CD8-positive, alpha-beta T cell (primary cell): ENCODE measurements at regions of chr1 and their contacts with region 1.

Region 1: DNA sequence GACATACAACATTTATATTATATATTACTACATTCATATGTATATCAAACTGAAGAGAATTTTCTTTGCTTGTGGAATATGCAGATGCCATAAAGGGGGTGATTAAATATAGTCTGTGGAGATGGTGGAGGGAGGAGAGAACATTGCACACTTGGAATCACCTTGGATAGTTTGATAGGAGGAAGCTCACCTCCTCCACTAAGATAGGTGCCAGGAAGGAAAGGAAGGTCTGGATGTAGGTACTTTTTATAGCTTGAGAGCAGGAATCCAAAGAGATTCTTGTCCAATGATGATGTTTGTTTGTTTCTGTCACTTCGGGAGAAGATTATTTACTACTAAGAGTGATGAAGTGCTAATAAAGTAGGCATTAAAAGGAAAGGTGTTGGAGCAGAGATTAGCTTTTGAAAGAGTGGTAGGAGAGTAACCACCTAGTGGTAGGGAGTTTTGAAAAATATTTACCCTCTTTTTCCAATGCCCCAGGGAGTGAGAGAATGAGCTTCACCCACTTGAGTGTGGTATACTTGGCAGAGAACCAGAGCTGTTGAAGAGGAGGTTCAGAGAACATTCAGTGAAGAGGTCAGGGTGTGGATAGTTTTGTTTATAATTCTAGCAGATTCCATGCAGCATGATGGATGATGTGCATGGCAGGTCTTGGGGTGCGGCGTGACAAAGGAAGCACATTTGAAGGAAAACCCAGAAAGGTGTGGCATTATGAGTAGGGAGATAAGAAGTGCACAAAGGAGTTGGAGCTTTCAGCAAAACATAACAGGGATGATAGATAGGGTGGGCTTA is 145.0 kb downstream of the PATJ start:
- DNase-seq: no peak
- ATAC-seq: no peak
- H3K4me3 ChIP-seq: no peak overlapping the region
- H3K4me3 Mint-ChIP-seq: no peak overlapping the region
- H3K27ac ChIP-seq: no peak overlapping the region
- H3K27ac Mint-ChIP-seq: no peak overlapping the region
- H3K4me1 ChIP-seq: no peaks in the 10 kb centered on the region
- H3K4me1 Mint-ChIP-seq: no peaks in the 10 kb centered on the region
- H3K27me3 ChIP-seq: no peaks in the 10 kb centered on the region
- H3K27me3 Mint-ChIP-seq: no peaks in the 10 kb centered on the region
- CTCF ChIP-seq: no peak

Region 2: GRCh38 chr1:61910035-61910434 is 22.8 kb after region 1 on chr1:
- CTCF ChIA-PET with region 1: no interaction called
- POLR2A ChIA-PET with region 1: no interaction called
- intact Hi-C with region 1: loop called in 1 of 2 experiments (anchors 1 kb)
- DNase-seq: no peak
- ATAC-seq: no peak
- H3K4me3 ChIP-seq: no peak overlapping the region
- H3K4me3 Mint-ChIP-seq: no peak overlapping the region
- H3K27ac ChIP-seq: no peak overlapping the region
- H3K27ac Mint-ChIP-seq: no peak overlapping the region
- H3K4me1 ChIP-seq: no peaks in the 10 kb centered on the region
- H3K4me1 Mint-ChIP-seq: no peaks in the 10 kb centered on the region
- H3K27me3 ChIP-seq: no peaks in the 10 kb centered on the region
- H3K27me3 Mint-ChIP-seq: no peaks in the 10 kb centered on the region
- CTCF ChIP-seq: no peak

Region 3: DNA sequence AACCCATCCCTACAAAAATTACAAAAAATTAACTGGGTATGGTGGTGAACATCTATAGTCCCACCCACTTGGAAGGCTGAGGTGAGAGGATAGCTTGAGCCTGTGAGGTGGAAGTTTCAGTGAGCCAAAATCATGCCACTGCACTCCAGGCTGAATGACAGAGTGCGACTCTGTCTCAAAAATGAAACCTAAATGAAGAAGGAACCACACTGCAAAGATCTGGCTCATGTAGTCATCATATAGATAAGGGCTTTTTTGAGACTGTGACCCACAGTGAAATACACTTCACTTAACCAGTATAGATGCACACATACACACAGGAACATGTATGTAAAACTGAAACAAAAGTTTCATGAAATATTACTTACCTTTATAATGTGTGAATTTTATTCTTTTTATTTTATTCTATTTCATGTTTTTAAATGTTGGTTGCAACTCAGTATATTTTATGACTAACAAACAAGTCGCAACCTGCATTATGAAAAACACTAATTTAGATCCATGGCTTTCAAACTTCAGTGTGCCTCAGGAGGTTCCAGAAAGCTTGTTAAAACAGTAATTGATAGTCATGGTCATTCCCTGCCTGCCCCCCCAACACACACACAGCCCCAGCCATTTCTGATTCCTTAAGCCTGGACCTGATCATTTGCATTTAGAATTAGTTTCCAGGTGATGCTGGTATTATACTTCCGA is 44.5 kb after region 1 on chr1:
- CTCF ChIA-PET with region 1: no interaction called
- POLR2A ChIA-PET with region 1: no interaction called
- intact Hi-C with region 1: no loop called
- DNase-seq: no peak
- ATAC-seq: no peak
- H3K4me3 ChIP-seq: no peak overlapping the region
- H3K4me3 Mint-ChIP-seq: no peak overlapping the region
- H3K27ac ChIP-seq: no peak overlapping the region
- H3K27ac Mint-ChIP-seq: no peak overlapping the region
- H3K4me1 ChIP-seq: no peaks in the 10 kb centered on the region
- H3K4me1 Mint-ChIP-seq: peaks cover 9% of the 10 kb centered on the region
- H3K27me3 ChIP-seq: no peaks in the 10 kb centered on the region
- H3K27me3 Mint-ChIP-seq: no peaks in the 10 kb centered on the region
- CTCF ChIP-seq: no peak

Region 4: GRCh38 chr1:62241377-62242131 is 354.3 kb after region 1 on chr1:
- CTCF ChIA-PET with region 1: no interaction called
- POLR2A ChIA-PET with region 1: no interaction called
- intact Hi-C with region 1: no loop called
- DNase-seq: no peak
- ATAC-seq: no peak
- H3K4me3 ChIP-seq: no peak overlapping the region
- H3K4me3 Mint-ChIP-seq: no peak overlapping the region
- H3K27ac ChIP-seq: no peak overlapping the region
- H3K27ac Mint-ChIP-seq: no peak overlapping the region
- H3K4me1 ChIP-seq: no peaks in the 10 kb centered on the region
- H3K4me1 Mint-ChIP-seq: no peaks in the 10 kb centered on the region
- H3K27me3 ChIP-seq: no peaks in the 10 kb centered on the region
- H3K27me3 Mint-ChIP-seq: peaks cover 2% of the 10 kb centered on the region
- CTCF ChIP-seq: no peak

Region 5: DNA sequence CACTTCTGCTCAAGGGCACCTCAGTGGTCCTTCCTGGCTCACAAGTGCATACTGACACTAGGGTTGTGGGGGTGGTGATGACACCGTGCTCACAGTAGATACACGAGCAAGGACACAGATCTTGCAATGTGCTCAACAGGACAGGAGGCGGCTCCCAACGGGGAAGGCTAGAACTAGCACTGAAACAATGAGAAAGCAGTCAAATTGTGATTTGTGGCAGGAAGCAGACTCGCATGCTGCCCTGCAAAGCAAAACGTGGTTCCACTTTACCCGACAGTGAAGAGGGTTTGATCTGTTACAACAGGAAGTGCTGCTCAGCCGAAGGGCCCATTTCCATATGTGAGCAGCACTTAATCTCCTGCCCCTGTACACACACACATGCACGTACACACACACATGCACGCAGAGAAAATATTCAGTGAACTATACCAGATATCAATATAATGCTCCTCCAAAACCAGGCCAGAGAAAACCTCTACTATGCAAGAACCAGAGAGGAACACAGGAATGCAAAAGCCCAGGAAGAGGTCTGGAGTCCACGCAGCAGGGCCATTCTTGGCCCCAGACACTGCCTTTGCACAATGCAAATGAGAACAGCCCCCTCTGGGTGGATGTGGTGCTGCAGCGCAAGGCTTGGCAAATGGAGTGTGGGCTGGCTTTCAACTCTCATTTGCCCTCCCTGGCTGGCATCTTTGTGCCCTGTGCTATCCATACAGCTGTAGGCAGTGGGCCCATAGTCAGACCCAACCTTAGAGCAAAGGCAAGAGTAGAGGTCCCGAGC is 384.9 kb after region 1 on chr1:
- CTCF ChIA-PET with region 1: no interaction called
- POLR2A ChIA-PET with region 1: no interaction called
- intact Hi-C with region 1: no loop called
- DNase-seq: peak in 8 of 9 experiments; percentile 22 to 79 (median 50)
- ATAC-seq: peak; percentile 90
- H3K4me3 ChIP-seq: no peak overlapping the region
- H3K4me3 Mint-ChIP-seq: peak overlapping the region; percentile 54
- H3K27ac ChIP-seq: peak overlapping the region; percentile 4 to 64
- H3K27ac Mint-ChIP-seq: peak overlapping the region; percentile 90
- H3K4me1 ChIP-seq: peaks cover 25% of the 10 kb centered on the region
- H3K4me1 Mint-ChIP-seq: peaks cover 30% of the 10 kb centered on the region
- H3K27me3 ChIP-seq: no peaks in the 10 kb centered on the region
- H3K27me3 Mint-ChIP-seq: no peaks in the 10 kb centered on the region
- CTCF ChIP-seq: peak; percentile 13